ENCODE measurements at regions of chr9 and their contacts with region 1.

Region 1: DNA sequence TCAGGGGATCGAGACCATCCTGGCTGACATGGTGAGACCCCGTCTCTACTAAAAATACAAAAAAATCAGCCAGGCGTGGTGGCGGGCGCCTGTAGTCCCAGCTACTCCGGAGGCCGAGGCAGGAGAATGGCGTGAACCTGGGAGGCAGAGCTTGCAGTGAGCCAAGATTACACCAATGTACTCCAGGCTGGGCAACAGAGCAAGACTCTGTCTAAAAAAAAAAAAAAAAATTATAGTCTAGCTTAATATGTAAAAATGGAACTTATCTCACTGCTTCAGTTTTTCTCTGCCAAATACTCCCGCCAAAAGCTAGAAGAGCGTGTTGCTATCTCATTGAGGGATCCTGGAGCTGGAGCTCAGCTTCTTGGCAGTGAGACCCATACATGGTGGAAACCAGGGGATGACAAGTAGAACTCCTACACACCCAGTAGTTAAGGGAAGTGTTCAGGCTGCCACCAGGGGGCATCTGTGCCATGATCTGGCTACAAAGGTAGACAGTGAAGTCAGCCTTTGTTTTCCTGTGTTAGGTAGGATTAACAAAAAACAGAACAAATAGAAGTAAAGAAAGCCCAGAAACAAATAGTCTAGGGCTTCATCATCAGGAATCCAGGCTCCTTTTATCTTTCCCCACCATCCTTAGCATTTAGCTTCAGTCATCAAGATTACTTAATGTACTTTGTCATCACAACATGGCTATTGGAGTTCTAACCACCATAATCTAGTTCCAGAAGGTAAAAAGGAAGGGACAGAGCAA is 33.6 kb upstream of the GLIPR2 start:
- DNase-seq: peak; percentile 95
- H3K4me3 Mint-ChIP-seq: no peak overlapping the region
- H3K27ac Mint-ChIP-seq: peak overlapping the region; percentile 34
- H3K4me1 Mint-ChIP-seq: peaks cover 6% of the 10 kb centered on the region
- H3K27me3 Mint-ChIP-seq: no peaks in the 10 kb centered on the region

Region 2: GRCh38 chr9:35748858-35749514 is 353.9 kb before region 1 on chr9 and contains the starts of genes GBA2 and RGP1:
- CTCF ChIA-PET with region 1: no interaction called
- intact Hi-C with region 1: no loop called
- DNase-seq: peak; percentile 67
- H3K4me3 Mint-ChIP-seq: peak within 1 kb of the TSS; percentile 89
- H3K27ac Mint-ChIP-seq: peak within 1 kb of the TSS; percentile 88
- H3K4me1 Mint-ChIP-seq: peaks cover 32% of the 10 kb centered on the region
- H3K27me3 Mint-ChIP-seq: no peaks in the 10 kb centered on the region
- total RNA-seq, gene GBA2: 20.3 to 22.7 TPM
- total RNA-seq, gene RGP1: 12.0 to 13.3 TPM

Region 3: GRCh38 chr9:36092509-36093215 is 10.3 kb before region 1 on chr9:
- CTCF ChIA-PET with region 1: interaction called, 18 read pairs
- intact Hi-C with region 1: no loop called
- DNase-seq: peak; percentile 58
- H3K4me3 Mint-ChIP-seq: no peak overlapping the region
- H3K27ac Mint-ChIP-seq: peak overlapping the region; percentile 59
- H3K4me1 Mint-ChIP-seq: peaks cover 12% of the 10 kb centered on the region
- H3K27me3 Mint-ChIP-seq: no peaks in the 10 kb centered on the region

Region 4: DNA sequence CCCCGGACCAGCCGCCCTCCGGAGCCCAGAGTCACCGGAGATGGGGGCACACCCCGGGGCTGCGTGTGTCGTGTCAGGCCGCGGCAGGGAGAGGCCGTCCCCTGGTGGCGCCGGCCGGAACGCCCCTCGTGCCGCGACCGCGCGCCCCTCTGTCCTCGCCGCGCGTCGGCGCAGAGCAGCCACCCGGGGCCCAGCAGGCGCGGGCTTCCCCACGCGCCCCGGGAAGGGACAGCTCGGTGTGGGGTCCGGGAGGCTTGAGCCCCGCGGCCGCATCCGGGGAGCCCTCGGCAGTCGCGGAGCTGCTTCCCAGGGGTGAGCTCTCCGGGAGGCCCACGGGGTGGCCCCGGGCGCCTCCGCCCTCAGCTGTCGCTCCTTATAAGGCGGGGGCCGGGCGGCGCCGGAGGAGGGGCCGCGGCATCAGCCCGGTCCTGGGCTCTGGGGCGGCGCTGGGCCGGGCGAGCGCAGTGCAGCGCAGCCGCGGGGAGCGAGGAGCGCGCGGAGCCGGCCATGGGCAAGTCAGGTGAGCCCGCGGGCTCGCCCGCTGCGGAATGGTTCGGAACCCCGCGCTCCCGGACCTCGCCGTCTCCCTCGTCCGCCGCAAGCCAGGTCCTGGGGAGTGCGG is 33.5 kb after region 1 on chr9 and contains the start of gene GLIPR2:
- CTCF ChIA-PET with region 1: interaction called, 7 read pairs
- intact Hi-C with region 1: loop called (anchors 2 kb)
- DNase-seq: peak; percentile 80
- H3K4me3 Mint-ChIP-seq: peak within 1 kb of the TSS; percentile 86
- H3K27ac Mint-ChIP-seq: no peak within 1 kb of the TSS
- H3K4me1 Mint-ChIP-seq: peaks cover 44% of the 10 kb centered on the region
- H3K27me3 Mint-ChIP-seq: no peaks in the 10 kb centered on the region
- total RNA-seq, gene GLIPR2: 8.0 to 9.7 TPM

Region 5: DNA sequence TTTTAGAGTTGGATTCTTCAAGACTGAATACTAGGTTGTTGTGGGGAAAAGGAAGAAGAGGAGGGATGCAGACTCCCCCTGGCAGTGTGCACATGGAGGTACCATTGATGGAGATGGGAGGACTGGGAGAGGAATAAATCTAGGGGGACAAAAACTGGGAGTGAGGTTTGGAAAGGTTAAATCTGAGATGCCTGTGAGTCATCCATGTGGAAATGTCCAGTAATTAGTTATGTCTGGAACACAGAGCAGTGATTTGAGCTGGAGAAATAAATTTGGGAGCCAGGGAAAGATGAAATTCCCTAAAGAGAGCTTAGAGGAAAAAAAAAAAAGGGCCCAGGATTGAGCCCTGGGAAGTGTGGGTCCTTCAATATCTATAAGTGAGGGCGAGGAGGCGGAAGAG is 58.3 kb after region 1 on chr9:
- CTCF ChIA-PET with region 1: interaction called, 283 read pairs
- intact Hi-C with region 1: loop called (anchors 1 kb)
- DNase-seq: no peak
- H3K4me3 Mint-ChIP-seq: no peak overlapping the region
- H3K27ac Mint-ChIP-seq: no peak overlapping the region
- H3K4me1 Mint-ChIP-seq: peaks cover 2% of the 10 kb centered on the region
- H3K27me3 Mint-ChIP-seq: no peaks in the 10 kb centered on the region

Region 6: GRCh38 chr9:36190388-36191287 is 87.7 kb after region 1 on chr9 and contains the start of gene CLTA:
- CTCF ChIA-PET with region 1: interaction called, 20 read pairs
- intact Hi-C with region 1: loop called (anchors 1 kb)
- DNase-seq: peak; percentile 98
- H3K4me3 Mint-ChIP-seq: peak within 1 kb of the TSS; percentile 84
- H3K27ac Mint-ChIP-seq: peak within 1 kb of the TSS; percentile 84
- H3K4me1 Mint-ChIP-seq: peaks cover 42% of the 10 kb centered on the region
- H3K27me3 Mint-ChIP-seq: no peaks in the 10 kb centered on the region
- total RNA-seq, gene CLTA: 96.4 to 101 TPM